ENCODE measurements at regions of chr1 and their contacts with region 1.

Region 1: DNA sequence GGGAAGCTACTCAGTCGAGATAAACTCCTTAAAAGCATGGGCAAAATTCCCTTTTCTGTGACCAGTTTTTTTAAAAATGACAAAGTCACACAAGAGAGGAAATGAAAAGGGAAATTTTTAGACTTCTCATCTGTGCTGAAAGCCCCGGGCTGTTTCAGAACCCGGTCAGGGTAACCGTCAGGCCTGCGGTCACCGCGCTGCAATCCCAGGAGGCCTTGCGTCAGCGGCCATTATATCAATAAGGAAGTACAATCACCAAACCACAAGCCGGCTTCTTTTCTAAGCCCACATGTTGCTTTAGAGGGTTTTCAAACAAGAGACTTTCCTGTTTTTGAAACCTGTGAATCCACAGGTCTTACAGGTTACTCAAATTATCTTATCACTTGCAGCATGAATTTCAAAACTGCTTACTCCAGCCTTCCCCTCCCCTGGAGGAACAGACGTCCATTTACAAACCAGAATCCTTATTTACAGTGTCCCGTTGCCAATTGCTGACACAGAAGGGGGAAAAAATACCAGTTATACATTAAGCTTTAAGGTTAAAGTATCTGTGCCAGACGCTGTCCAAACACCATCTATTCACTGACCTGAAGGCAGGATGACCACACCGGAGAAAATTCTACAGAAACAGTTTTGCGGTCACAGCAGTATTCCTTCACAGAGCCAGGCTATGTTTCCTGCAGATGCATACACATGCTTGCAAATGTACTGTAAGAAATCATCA is 165.3 kb downstream of the TOMM20 start:
- DNase-seq: peak; percentile 87
- H3K4me3 Mint-ChIP-seq: peak overlapping the region; percentile 62
- H3K27ac Mint-ChIP-seq: peak overlapping the region; percentile 93
- H3K4me1 Mint-ChIP-seq: peaks cover 70% of the 10 kb centered on the region
- H3K27me3 Mint-ChIP-seq: no peaks in the 10 kb centered on the region

Region 2: GRCh38 chr1:234599617-234600417 is 363.5 kb before region 1 on chr1:
- intact Hi-C with region 1: loop called (anchors 2 kb)
- DNase-seq: peak; percentile 70
- H3K4me3 Mint-ChIP-seq: peak overlapping the region; percentile 82
- H3K27ac Mint-ChIP-seq: peak overlapping the region; percentile 92
- H3K4me1 Mint-ChIP-seq: peaks cover 53% of the 10 kb centered on the region
- H3K27me3 Mint-ChIP-seq: no peaks in the 10 kb centered on the region

Region 3: DNA sequence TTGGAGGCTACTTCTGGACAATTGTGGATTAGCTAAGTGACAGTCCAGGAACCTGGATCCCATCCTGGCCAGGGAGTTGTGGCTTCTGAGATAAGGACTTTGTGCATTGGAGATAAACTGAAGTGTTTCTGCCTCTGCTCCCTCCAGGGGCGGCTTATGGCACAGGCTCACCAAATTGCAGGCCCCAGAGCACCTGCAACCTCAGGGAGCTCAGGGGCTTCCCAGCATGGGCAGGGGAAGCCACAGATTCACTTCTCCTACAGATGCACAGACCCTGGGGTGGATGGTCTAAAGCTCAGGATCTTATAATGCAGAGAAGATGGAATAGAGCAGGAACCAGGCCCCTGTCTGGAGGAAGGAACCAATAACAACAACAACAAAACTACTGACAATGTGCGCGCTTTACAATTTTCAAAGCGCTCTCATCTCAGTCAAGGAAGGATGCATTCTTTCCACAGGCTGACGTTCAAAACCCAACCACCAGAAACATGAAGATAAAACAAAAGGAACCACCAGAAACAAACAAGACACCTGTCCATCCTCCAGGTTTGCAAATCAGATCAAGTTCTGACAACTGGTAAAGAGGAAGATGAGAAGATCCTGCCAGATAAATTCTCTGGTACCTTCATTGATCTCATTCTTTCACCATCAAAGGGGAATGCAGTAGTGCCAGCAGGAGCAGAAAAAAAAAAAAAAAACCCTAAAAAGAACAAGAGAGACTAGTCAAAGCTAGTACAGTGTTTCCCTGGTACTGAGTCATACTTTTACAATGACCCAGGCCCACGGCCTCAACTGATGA is 232.4 kb before region 1 on chr1:
- intact Hi-C with region 1: loop called (anchors 1 kb)
- DNase-seq: peak; percentile 36
- H3K4me3 Mint-ChIP-seq: no peak overlapping the region
- H3K27ac Mint-ChIP-seq: peak overlapping the region; percentile 97
- H3K4me1 Mint-ChIP-seq: peaks cover 74% of the 10 kb centered on the region
- H3K27me3 Mint-ChIP-seq: no peaks in the 10 kb centered on the region

Region 4: GRCh38 chr1:234875953-234876855 is 87.1 kb before region 1 on chr1:
- intact Hi-C with region 1: loop called (anchors 1 kb)
- DNase-seq: no peak
- H3K4me3 Mint-ChIP-seq: no peak overlapping the region
- H3K27ac Mint-ChIP-seq: peak overlapping the region; percentile 88
- H3K4me1 Mint-ChIP-seq: peaks cover 63% of the 10 kb centered on the region
- H3K27me3 Mint-ChIP-seq: no peaks in the 10 kb centered on the region

Region 5: DNA sequence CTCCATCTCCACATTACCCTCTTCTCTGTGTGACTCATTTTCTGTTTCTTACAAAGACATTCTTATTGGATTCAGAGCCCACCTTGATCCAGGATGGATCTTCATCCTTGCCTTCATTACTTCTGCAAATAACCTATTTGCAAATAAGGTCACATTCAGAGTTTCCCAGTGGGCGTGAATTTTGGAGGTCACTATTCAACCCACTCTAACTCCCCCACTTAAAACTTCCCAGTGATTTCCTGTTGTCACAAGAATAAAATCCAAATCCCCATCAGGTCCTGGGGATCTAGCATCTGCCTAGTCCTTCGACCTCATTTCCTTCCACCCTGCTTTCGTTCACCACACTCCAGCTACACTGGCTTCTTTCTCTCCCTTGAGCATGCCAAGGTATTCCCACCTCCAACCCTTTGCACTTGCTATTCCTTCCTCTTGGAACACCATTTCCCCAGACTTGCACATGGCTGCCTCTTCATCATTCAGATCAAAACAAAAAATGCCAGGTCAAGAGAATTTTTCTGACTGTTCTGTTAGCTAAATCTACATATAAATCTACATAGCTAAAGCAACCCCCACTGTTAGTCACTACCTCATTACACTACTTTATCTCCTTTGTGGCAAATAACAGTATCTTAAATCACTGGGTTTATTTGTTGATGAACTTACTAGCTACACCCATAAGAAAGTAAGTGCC is 21.9 kb before region 1 on chr1:
- intact Hi-C with region 1: loop called (anchors 2 kb)
- DNase-seq: no peak
- H3K4me3 Mint-ChIP-seq: no peak overlapping the region
- H3K27ac Mint-ChIP-seq: no peak overlapping the region
- H3K4me1 Mint-ChIP-seq: peaks cover 40% of the 10 kb centered on the region
- H3K27me3 Mint-ChIP-seq: no peaks in the 10 kb centered on the region

Region 6: DNA sequence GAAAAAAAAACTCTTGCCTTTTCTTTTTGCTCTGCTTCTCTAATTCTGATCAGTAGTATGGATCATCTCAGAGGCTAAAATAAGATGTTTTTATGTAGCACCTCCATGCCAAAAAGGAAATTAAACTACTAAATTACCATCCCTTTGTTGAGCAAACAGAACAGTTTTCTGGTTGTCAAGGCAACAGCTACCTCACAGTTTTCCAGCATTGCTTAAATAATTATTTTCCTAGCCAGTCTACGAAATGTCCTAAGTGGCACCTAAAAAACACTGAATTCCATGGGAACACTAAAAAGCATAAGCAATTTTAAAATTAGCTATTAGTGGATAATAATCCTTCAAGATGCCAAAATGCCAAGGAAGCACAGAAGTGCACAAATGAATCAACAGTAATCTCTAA is 303.0 kb after region 1 on chr1:
- intact Hi-C with region 1: no loop called
- DNase-seq: no peak
- H3K4me3 Mint-ChIP-seq: no peak overlapping the region
- H3K27ac Mint-ChIP-seq: no peak overlapping the region
- H3K4me1 Mint-ChIP-seq: peaks cover 22% of the 10 kb centered on the region
- H3K27me3 Mint-ChIP-seq: no peaks in the 10 kb centered on the region

Region 7: GRCh38 chr1:235375919-235376605 is 412.7 kb after region 1 on chr1:
- intact Hi-C with region 1: no loop called
- DNase-seq: no peak
- H3K4me3 Mint-ChIP-seq: no peak overlapping the region
- H3K27ac Mint-ChIP-seq: no peak overlapping the region
- H3K4me1 Mint-ChIP-seq: peaks cover 2% of the 10 kb centered on the region
- H3K27me3 Mint-ChIP-seq: no peaks in the 10 kb centered on the region

Measured in activated T-helper 2 cell treated with anti-CD3 and anti-CD28 coated beads, Interferon-gamma antibody, Interleukin-2, Interleukin-4, amounts not matched to agents 10 μg/mL and 5 μg/mL and 100 μg/mL, durations not matched to agents 14 hours and 24 hours and 36 hours (primary cell).